ENCODE measurements at regions of chr18 and their contacts with region 1.

Region 1: GRCh38 chr18:80108728-80109675 is at the start of gene ADNP2:
- DNase-seq: peak; percentile 96
- H3K4me3 Mint-ChIP-seq: peak within 1 kb of the TSS; percentile 85
- H3K27ac Mint-ChIP-seq: peak within 1 kb of the TSS; percentile 88
- H3K4me1 Mint-ChIP-seq: peaks cover 24% of the 10 kb centered on the region
- H3K27me3 Mint-ChIP-seq: no peaks in the 10 kb centered on the region
- total RNA-seq, gene ADNP2: 29.3 and 29.8 TPM in 2 replicates

Region 2: DNA sequence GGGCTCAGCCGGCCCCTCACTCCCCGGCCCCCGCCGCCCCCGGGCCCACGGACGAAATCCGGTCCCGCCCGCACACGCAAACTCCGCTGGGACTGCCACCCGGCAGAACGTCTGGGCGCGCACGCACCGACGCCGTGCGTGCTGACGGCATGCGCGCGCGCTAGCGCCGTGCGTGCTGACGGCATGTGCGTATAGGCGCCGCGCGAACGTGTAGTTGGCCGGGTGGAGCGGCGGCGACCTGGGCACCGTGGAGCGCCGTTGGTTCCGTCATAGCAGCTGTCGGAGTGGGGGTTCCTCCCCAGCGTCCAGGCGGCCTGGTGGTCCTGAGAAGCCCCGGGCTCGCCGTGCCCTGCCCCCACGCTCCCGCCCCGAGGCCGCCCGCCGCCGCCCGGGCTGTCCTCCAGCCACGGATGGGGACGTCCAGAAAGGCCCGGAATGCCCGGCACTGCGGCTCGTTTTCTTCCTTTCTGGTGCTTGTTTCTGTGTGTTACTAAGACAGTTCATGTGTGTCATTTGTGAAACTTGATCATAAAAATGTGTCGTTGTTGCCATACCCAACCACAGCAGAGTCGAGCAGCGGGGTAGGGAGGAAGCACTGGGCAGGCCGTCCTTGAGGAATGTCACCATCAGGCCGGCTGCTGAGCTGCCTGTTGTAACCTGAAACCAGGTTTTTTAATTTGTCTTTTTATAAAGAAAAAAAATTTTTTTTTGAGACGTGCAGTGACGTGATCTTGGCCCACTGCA is 120.4 kb before region 1 on chr18 and contains the start of gene TXNL4A:
- intact Hi-C with region 1: loop called (anchors 2 kb)
- DNase-seq: peak; percentile 96
- H3K4me3 Mint-ChIP-seq: peak within 1 kb of the TSS; percentile 88
- H3K27ac Mint-ChIP-seq: peak within 1 kb of the TSS; percentile 94
- H3K4me1 Mint-ChIP-seq: peaks cover 32% of the 10 kb centered on the region
- H3K27me3 Mint-ChIP-seq: no peaks in the 10 kb centered on the region
- total RNA-seq, gene TXNL4A: 198 and 210 TPM in 2 replicates

Region 3: DNA sequence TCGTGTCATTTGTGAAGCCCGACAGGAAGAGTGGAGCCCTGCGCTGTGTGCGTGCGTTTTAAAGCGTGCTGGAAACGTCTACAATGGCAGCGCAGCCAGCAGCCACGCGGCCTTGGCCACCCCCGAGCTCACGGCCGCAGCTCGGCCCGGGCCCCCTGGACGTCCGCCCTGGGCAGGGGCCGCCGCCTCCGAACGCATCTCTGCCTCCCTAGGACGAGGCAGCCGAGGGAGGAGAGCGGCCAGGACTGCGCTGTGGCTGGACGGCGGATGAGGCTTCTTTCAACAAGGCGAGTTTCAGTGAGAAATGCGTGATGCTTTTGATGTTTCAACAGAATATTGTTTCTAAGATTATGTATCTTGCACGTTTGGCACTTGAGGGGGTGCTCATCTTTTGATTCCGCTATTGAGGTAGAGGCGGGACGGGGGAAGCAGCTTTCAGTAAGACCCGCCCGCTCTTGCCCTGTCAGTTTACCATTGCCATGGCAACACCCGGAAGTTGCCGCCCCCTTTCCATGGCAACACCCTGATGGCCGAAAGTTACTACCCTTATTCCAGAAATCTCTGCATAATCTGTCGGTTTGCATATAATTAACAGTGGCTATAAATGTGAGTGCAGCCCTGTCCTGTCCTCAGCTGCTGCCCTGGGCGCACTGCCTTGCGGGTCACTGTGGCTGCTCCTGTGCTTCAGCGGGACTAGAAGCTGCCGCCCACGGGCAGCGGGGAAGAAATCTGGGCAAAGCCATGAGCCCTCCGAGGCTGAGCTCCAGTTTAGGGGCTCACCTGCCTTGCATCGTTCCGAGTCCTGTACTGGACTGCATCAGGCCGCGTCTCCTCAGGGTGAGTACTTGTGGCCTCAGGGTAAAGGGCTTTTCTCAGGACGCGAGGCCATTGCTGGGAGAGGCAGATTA is 38.7 kb after region 1 on chr18:
- intact Hi-C with region 1: loop called (anchors 5 kb)
- DNase-seq: peak; percentile 94
- H3K4me3 Mint-ChIP-seq: peak overlapping the region; percentile 88
- H3K27ac Mint-ChIP-seq: peak overlapping the region; percentile 82
- H3K4me1 Mint-ChIP-seq: peaks cover 5% of the 10 kb centered on the region
- H3K27me3 Mint-ChIP-seq: no peaks in the 10 kb centered on the region